GM12878 (cell line): ENCODE measurements at regions of chr18 and their contacts with region 1.

Region 1: DNA sequence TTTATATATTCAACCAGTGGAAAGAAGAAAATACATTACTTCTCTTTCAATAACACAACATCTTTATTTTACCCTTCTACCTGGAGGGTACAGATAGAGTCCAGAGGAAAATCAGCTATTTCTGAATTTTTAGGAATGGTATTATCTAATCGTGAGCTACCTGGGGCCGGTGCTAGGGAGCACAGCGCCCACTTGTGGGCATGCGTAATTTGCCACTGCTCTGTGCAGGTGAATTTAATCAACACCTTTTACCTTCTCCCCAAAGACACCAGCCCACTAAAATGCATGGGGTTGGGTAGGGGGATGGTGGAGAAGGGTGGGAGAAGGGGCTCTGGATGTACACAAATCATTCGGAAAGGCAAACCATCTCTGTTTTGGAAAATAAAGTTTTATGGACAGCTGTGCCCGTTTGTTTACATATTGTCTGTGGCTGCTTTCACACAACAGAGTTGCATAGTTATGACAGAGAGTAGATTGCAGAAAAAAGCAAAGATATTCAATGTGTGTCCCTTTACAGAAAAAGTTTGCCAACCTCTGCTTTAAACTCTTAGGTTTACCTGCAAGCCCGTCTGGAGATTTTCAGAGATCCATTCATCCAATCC is 51.5 kb upstream of the DCC start:
- DNase-seq: no peak
- ATAC-seq: peak; percentile 94
- H3K4me3 ChIP-seq: no peak overlapping the region
- H3K27ac ChIP-seq: no peak overlapping the region
- H3K4me1 ChIP-seq: no peaks in the 10 kb centered on the region
- H3K27me3 ChIP-seq: no peaks in the 10 kb centered on the region
- CTCF ChIP-seq: peak; percentile 88 to 93 (median 88)
- EP300 ChIP-seq: no peak
- POLR2A ChIP-seq: no peak
- RAD21 ChIP-seq: peak; percentile 92

Region 2: DNA sequence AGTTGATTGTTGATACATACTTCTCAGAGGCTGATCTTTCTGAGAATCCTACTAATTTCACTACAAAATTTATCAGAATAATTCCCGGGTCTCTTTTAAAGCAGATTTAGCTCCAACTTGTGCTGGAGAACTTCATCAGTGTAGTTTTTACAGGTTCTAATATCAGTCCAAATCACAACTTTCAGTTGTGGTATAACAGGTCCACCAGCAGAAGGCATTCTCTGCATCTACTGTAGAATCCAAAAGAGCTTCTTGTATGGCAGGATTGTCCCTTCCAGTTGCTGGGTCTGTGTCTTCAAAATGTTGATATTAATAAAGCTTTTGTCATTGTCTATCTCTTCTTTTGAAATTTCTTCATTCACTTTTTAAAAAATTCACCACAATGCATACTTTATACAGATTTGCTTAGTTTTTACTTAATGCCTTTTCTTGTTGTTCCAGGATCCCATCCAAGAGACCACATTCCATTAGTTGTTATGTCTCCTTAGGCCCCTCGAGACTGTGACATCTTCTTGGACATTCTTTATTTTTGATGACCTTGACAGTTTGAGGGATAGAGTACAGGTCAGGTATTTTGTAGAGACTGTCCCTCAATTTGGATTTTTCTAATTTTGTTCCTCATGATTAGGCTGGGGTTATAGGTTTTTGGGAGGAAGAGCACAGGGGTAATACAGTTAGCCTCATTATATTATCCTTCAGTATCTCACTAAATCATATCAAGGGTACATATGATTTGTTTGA is 600.5 kb before region 1 on chr18:
- CTCF ChIA-PET with region 1: interaction called, 9 read pairs
- POLR2A ChIA-PET with region 1: no interaction called
- RAD21 ChIA-PET with region 1: interaction called, 19 read pairs
- SMC1A ChIA-PET with region 1: interaction called, 17 read pairs
- in situ Hi-C with region 1: no loop called
- intact Hi-C with region 1: no loop called
- DNase-seq: no peak
- ATAC-seq: no peak
- H3K4me3 ChIP-seq: no peak overlapping the region
- H3K27ac ChIP-seq: no peak overlapping the region
- H3K4me1 ChIP-seq: no peaks in the 10 kb centered on the region
- H3K27me3 ChIP-seq: no peaks in the 10 kb centered on the region
- CTCF ChIP-seq: peak in 1 of 3 experiments; percentile 25; a peak in 1 of 6 replicates
- EP300 ChIP-seq: no peak
- POLR2A ChIP-seq: no peak
- RAD21 ChIP-seq: peak; percentile 46

Region 3: GRCh38 chr18:51941999-51942398 is 346.5 kb before region 1 on chr18:
- CTCF ChIA-PET with region 1: interaction called, 11 read pairs
- POLR2A ChIA-PET with region 1: no interaction called
- RAD21 ChIA-PET with region 1: interaction called, 9 read pairs
- SMC1A ChIA-PET with region 1: interaction called, 7 read pairs
- in situ Hi-C with region 1: no loop called
- intact Hi-C with region 1: no loop called
- DNase-seq: no peak
- ATAC-seq: peak; percentile 43
- H3K4me3 ChIP-seq: no peak overlapping the region
- H3K27ac ChIP-seq: no peak overlapping the region
- H3K4me1 ChIP-seq: no peaks in the 10 kb centered on the region
- H3K27me3 ChIP-seq: no peaks in the 10 kb centered on the region
- CTCF ChIP-seq: no peak
- EP300 ChIP-seq: no peak
- POLR2A ChIP-seq: no peak
- RAD21 ChIP-seq: no peak

Region 4: GRCh38 chr18:51953521-51953920 is 335.0 kb before region 1 on chr18:
- CTCF ChIA-PET with region 1: interaction called, 4 read pairs
- POLR2A ChIA-PET with region 1: no interaction called
- RAD21 ChIA-PET with region 1: interaction called, 11 read pairs
- SMC1A ChIA-PET with region 1: interaction called, 4 read pairs
- in situ Hi-C with region 1: no loop called
- intact Hi-C with region 1: loop called (anchors 5 kb)
- DNase-seq: peak; percentile 83
- ATAC-seq: peak; percentile 91
- H3K4me3 ChIP-seq: no peak overlapping the region
- H3K27ac ChIP-seq: peak overlapping the region; percentile 76
- H3K4me1 ChIP-seq: peaks cover 22% of the 10 kb centered on the region
- H3K27me3 ChIP-seq: no peaks in the 10 kb centered on the region
- CTCF ChIP-seq: no peak
- EP300 ChIP-seq: peak; percentile 92 to 94
- POLR2A ChIP-seq: no peak; the same call in 1 of the 2 replicates
- RAD21 ChIP-seq: no peak; the same call in 1 of the 2 replicates

Region 5: DNA sequence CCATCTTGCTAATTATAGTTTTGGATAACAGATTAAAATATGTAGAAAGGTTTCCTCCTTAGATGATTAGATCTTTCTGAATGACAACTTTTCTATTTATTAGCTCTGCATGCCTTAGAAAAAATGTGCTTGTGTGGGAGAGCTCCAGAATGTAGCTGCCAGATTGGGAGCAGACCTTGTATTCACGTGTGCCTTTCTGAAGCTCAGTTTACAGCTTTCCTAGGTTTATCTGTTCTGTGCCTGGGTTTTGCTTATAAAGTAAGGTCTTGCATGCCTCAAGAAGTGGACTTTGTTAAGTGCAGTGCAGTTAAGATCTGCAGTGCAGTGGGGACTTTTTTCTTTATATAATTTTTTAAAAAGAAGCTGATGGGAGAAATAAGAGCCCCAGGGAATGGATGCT is 230.5 kb after region 1 on chr18:
- CTCF ChIA-PET with region 1: no interaction called
- POLR2A ChIA-PET with region 1: no interaction called
- RAD21 ChIA-PET with region 1: no interaction called
- SMC1A ChIA-PET with region 1: no interaction called
- in situ Hi-C with region 1: no loop called
- intact Hi-C with region 1: no loop called
- DNase-seq: no peak
- ATAC-seq: no peak
- H3K4me3 ChIP-seq: no peak overlapping the region
- H3K27ac ChIP-seq: no peak overlapping the region
- H3K4me1 ChIP-seq: no peaks in the 10 kb centered on the region
- H3K27me3 ChIP-seq: no peaks in the 10 kb centered on the region
- CTCF ChIP-seq: no peak
- EP300 ChIP-seq: no peak
- POLR2A ChIP-seq: no peak
- RAD21 ChIP-seq: no peak